IMR-90 (cell line): ENCODE measurements at regions of chr22 and their contacts with region 1.

Region 1: DNA sequence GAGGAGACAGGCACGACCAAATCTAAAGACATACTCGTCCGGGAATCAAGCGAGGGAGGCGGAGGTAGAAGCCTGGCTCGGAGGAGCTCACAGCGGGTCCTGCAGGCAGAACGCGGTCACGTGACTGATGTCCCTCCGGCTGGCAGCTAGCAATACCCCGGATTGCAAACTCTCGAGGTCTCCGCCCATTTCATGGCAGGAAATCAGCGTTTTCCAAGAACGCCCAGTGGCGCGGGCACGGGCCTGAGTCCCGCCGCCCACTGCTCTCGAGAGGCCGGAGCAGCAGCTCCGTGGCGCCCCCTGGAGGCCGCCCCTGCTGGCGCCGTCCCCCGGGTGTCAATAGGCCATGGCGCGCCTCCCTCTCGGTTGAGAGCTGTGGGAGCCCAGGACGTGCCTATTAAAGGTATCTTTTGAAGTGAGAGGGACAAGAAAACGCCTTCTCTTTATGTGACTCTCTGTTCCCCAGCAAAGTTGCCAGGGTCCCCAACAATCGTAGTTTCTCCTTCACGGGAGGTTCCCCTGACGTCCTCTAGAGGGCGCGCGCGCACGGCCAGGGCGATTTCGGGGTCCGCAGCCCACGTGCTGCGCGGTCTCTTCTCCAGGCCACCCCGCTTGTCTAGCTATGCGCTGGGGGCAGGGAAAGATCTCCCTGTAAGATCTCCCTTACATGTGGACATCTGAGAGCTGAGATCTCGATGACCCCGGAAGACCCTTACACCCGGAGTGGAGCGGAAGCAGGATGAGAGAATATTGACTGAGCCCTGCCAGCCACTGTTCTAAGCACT is 37.3 kb upstream of the RBFOX2 start:
- DNase-seq: peak; percentile 92
- ATAC-seq: peak; percentile 94
- H3K4me3 ChIP-seq: peak overlapping the region; percentile 52
- H3K27ac ChIP-seq: peak overlapping the region; percentile 64
- H3K4me1 ChIP-seq: peaks cover 5% of the 10 kb centered on the region
- H3K27me3 ChIP-seq: no peaks in the 10 kb centered on the region
- CTCF ChIP-seq: peak; percentile 81
- POLR2A ChIP-seq: no peak
- RAD21 ChIP-seq: peak; percentile 70

Region 2: DNA sequence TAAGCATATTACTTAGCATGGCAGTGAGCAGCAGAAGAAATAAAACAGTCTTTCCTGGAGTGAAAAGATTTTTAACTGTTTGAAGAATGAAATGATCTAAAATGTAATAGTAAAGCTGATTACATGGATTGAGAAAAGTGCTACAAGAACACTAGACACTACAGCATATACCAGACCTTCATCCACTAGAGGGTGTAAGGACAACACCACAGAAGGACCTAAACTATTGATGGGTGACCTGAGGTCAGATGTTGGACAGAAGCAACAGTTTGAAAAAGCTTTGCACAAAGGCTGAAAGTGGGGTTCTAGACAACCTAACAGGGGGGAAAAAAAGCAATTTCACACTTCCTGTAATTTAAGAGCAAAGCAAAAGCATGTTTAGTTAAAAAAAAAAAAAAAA is 135.0 kb before region 1 on chr22:
- CTCF ChIA-PET with region 1: interaction called, 33 read pairs
- POLR2A ChIA-PET with region 1: no interaction called
- dilution Hi-C with region 1: no loop called
- in situ Hi-C with region 1: loop called (anchors 5 kb)
- intact Hi-C with region 1: loop called (anchors 1 kb)
- DNase-seq: peak; percentile 80
- ATAC-seq: peak; percentile 94
- H3K4me3 ChIP-seq: no peak overlapping the region
- H3K27ac ChIP-seq: no peak overlapping the region
- H3K4me1 ChIP-seq: peaks cover 4% of the 10 kb centered on the region
- H3K27me3 ChIP-seq: no peaks in the 10 kb centered on the region
- CTCF ChIP-seq: peak; percentile 78
- POLR2A ChIP-seq: no peak
- RAD21 ChIP-seq: peak; percentile 89

Region 3: DNA sequence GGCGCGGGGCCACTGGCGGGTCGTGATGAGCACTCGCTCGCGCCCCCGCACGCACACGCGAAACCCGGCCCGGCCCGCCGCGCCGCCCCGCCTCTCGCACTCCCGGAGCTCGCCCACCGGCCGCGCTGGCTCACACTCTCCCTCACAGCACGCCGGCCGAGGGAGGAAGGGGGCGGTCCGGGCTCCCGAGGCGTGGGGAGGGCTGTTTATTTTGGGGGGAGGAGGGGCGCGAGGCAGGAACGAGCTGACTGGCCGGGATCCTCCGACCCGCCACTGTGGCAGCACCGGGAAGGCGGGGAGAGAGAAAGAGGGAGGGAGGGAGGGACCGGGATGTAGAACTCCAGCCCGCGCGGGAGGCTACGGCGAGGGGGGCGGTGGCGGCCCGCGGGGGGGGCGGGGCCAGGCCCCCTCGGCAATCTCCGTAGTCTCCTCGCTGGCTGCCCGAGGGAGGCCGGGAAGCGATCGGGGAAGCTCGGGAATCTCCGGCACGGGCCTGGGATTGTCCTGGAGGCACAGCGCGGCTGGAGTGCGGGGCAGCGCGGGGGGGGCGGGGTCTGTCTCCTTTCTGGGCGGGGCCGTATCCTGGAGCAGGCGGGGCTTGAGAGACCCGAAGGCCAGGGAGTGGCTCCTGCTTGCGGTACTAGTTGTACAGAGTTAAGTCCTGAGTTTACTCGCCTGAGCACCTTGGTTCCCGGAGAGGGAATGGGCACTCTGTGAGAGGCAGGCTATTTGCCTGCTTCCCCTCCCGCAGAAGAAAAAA is 37.1 kb before region 1 on chr22 and contains the start of gene RBFOX2:
- CTCF ChIA-PET with region 1: interaction called, 14 read pairs
- POLR2A ChIA-PET with region 1: interaction called, 8 read pairs
- dilution Hi-C with region 1: no loop called
- in situ Hi-C with region 1: no loop called
- intact Hi-C with region 1: loop called (anchors 2 kb)
- DNase-seq: peak; percentile 95
- ATAC-seq: peak; percentile 93
- H3K4me3 ChIP-seq: peak within 1 kb of the TSS; percentile 98
- H3K27ac ChIP-seq: peak within 1 kb of the TSS; percentile 95
- H3K4me1 ChIP-seq: peaks cover 4% of the 10 kb centered on the region
- H3K27me3 ChIP-seq: no peaks in the 10 kb centered on the region
- CTCF ChIP-seq: no peak
- POLR2A ChIP-seq: peak; percentile 52; the same call in 1 of the 2 replicates
- RAD21 ChIP-seq: no peak
- total RNA-seq, gene RBFOX2: 178 and 227 TPM in 2 replicates

Region 4: GRCh38 chr22:36084717-36085116 is 18.8 kb after region 1 on chr22:
- CTCF ChIA-PET with region 1: interaction called, 10 read pairs
- POLR2A ChIA-PET with region 1: no interaction called
- dilution Hi-C with region 1: no loop called
- in situ Hi-C with region 1: no loop called
- intact Hi-C with region 1: no loop called
- DNase-seq: no peak
- ATAC-seq: no peak
- H3K4me3 ChIP-seq: no peak overlapping the region
- H3K27ac ChIP-seq: no peak overlapping the region
- H3K4me1 ChIP-seq: peaks cover 2% of the 10 kb centered on the region
- H3K27me3 ChIP-seq: no peaks in the 10 kb centered on the region
- CTCF ChIP-seq: no peak
- POLR2A ChIP-seq: no peak
- RAD21 ChIP-seq: no peak

Region 5: DNA sequence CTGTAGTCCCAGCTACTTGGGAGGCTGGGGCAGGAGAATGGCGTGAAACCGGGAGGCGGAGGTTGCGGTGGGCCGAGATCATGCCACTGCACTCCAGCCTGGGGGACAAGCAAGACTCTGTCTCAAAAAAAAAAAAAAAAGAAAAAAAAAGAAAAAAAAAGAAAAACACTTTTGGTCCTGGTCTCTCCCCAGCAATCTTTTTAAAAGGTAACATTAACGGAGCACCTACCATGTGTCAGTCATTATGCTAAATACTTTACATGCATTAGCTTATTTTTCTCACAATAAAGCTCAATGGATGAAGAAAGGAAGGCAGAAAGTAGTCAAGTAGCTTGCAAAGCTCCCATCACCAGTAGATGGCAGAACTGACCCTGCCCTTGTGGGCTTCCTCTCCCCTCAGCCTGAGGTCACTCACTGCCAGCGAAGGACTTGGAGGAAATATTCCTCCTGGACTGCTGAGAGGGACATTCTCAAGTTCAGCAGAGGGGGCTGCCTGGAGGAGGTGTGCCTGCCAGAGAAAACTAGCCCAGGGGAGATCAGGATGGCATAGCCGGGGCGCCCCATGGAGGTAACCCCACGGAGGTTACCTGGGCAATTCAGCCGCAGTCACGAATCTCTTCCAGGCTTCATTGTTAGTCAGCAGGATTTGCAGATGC is 79.0 kb after region 1 on chr22:
- CTCF ChIA-PET with region 1: no interaction called
- POLR2A ChIA-PET with region 1: no interaction called
- dilution Hi-C with region 1: no loop called
- in situ Hi-C with region 1: no loop called
- intact Hi-C with region 1: no loop called
- DNase-seq: peak; percentile 69
- ATAC-seq: peak; percentile 96
- H3K4me3 ChIP-seq: no peak overlapping the region
- H3K27ac ChIP-seq: no peak overlapping the region
- H3K4me1 ChIP-seq: no peaks in the 10 kb centered on the region
- H3K27me3 ChIP-seq: peaks cover 12% of the 10 kb centered on the region
- CTCF ChIP-seq: peak; percentile 81
- POLR2A ChIP-seq: no peak
- RAD21 ChIP-seq: peak; percentile 90